WTC11 (cell line): ENCODE measurements at regions of chr2 and their contacts with region 1.

Region 1: GRCh38 chr2:38947240-38948239 is 57.9 kb downstream of the ARHGEF33 start:
- DNase-seq: peak; percentile 82
- ATAC-seq: peak; percentile 92
- H3K4me3 Mint-ChIP-seq: no peak overlapping the region
- H3K27ac Mint-ChIP-seq: no peak overlapping the region
- H3K4me1 Mint-ChIP-seq: peaks cover 31% of the 10 kb centered on the region
- H3K27me3 Mint-ChIP-seq: peaks cover 2% of the 10 kb centered on the region; the same call in 1 of the 2 replicates
- CTCF ChIP-seq: peak; percentile 53

Region 2: DNA sequence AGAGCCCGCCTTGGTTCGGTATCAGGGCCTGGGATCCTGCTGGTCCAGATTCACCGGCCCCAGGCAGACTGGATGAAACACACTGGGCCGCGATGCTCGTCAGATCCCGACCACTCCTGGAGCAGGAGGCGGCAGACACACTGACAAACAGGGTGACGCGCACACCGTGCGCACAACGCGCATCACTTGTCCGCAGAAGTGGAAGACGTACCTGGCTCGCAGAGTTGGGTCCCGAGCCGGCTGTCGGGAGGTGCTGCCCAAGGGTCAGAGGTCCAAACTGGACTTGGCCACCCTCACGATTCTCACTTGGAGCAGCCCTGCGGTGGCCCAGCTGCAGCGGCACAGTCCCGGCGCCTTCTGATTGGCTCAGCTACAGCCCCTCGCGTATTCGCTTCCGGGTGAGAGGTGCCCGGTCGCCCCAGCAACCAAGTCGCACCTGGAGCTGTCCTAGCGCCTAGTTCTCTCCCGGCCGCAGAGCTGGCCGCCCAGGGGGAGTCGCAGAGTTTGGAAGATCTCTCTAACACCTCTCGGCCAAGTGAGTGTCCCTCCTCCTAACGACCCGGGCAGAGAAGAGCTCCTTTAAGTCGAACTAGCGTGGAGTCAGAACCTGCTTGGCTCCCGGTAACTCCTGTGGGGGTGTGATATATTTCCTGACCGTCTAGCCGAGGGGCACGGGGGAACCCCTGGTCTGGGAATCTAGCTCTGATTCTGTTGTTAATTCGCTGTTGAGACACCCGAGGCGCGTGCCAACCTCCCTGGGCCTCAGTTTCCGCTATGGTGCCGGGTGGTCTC is 71.8 kb before region 1 on chr2 and contains the starts of genes DHX57 and MORN2:
- CTCF ChIA-PET with region 1: interaction called, 21 read pairs
- POLR2A ChIA-PET with region 1: no interaction called
- DNase-seq: peak; percentile 87
- ATAC-seq: peak; percentile 99
- H3K4me3 Mint-ChIP-seq: peak within 1 kb of the TSS; percentile 87
- H3K27ac Mint-ChIP-seq: peak within 1 kb of the TSS; percentile 70
- H3K4me1 Mint-ChIP-seq: peaks cover 14% of the 10 kb centered on the region
- H3K27me3 Mint-ChIP-seq: no peaks in the 10 kb centered on the region
- CTCF ChIP-seq: no peak
- total RNA-seq, gene DHX57: 22.5 to 30.3 TPM (median 26.2 TPM) in 3 replicates
- total RNA-seq, gene MORN2: 5.9 to 8.0 TPM (median 7.4 TPM) in 3 replicates

Region 3: GRCh38 chr2:38935568-38936172 is 11.9 kb before region 1 on chr2:
- CTCF ChIA-PET with region 1: interaction called, 21 read pairs
- POLR2A ChIA-PET with region 1: no interaction called
- DNase-seq: no peak
- ATAC-seq: no peak
- H3K4me3 Mint-ChIP-seq: no peak overlapping the region
- H3K27ac Mint-ChIP-seq: no peak overlapping the region
- H3K4me1 Mint-ChIP-seq: no peaks in the 10 kb centered on the region
- H3K27me3 Mint-ChIP-seq: no peaks in the 10 kb centered on the region
- CTCF ChIP-seq: no peak

Region 4: GRCh38 chr2:38978296-38978903 is 30.9 kb after region 1 on chr2:
- CTCF ChIA-PET with region 1: interaction called, 10 read pairs
- POLR2A ChIA-PET with region 1: no interaction called
- DNase-seq: no peak
- ATAC-seq: no peak; the same call in 1 of the 2 replicates
- H3K4me3 Mint-ChIP-seq: no peak overlapping the region
- H3K27ac Mint-ChIP-seq: no peak overlapping the region
- H3K4me1 Mint-ChIP-seq: peaks cover 29% of the 10 kb centered on the region
- H3K27me3 Mint-ChIP-seq: no peaks in the 10 kb centered on the region
- CTCF ChIP-seq: no peak

Region 5: DNA sequence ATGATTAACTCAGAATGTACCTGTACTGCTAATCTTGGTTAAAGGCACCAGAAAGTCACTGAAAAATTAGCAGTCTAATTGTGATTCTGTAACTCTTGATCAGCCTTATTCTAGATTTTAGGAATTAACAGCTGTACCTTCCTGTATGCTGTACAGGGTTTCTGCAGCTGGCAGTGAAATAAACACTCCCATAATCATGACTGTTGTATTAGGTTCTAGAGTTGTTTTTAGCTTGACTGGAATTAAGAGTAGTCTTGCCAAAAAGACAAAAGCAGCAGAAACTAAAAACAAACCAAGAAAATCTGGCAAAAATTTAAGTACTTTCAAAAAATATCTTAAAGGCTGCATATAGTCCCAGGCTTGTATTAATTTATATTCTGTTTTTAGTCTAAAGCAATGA is 69.8 kb after region 1 on chr2:
- CTCF ChIA-PET with region 1: interaction called, 12 read pairs
- POLR2A ChIA-PET with region 1: no interaction called
- DNase-seq: no peak
- ATAC-seq: no peak
- H3K4me3 Mint-ChIP-seq: no peak overlapping the region
- H3K27ac Mint-ChIP-seq: no peak overlapping the region
- H3K4me1 Mint-ChIP-seq: peaks cover 32% of the 10 kb centered on the region
- H3K27me3 Mint-ChIP-seq: no peaks in the 10 kb centered on the region
- CTCF ChIP-seq: no peak

Region 6: GRCh38 chr2:39124000-39124745 is 176.6 kb after region 1 on chr2:
- CTCF ChIA-PET with region 1: interaction called, 29 read pairs
- POLR2A ChIA-PET with region 1: interaction called, 7 read pairs
- DNase-seq: peak; percentile 99
- ATAC-seq: peak; percentile 77
- H3K4me3 Mint-ChIP-seq: peak overlapping the region; percentile 82
- H3K27ac Mint-ChIP-seq: peak overlapping the region; percentile 100
- H3K4me1 Mint-ChIP-seq: peaks cover 31% of the 10 kb centered on the region
- H3K27me3 Mint-ChIP-seq: no peaks in the 10 kb centered on the region
- CTCF ChIP-seq: peak; percentile 32; the same call in 1 of the 2 replicates